ENCODE measurements at regions of chr20 and their contacts with region 1.

Region 1: GRCh38 chr20:4082406-4083097 is 67.2 kb upstream of the RNF24 start:
- DNase-seq: peak; percentile 64 to 79 (median 70)
- H3K4me3 ChIP-seq: peak overlapping the region in 1 of 2 donors; percentile 31
- H3K4me3 Mint-ChIP-seq: peak overlapping the region; percentile 30 to 88 (median 69)
- H3K27ac ChIP-seq: peak overlapping the region; percentile 39
- H3K27ac Mint-ChIP-seq: peak overlapping the region; percentile 83 to 97 (median 94)
- H3K4me1 ChIP-seq: peaks cover 48% of the 10 kb centered on the region
- H3K4me1 Mint-ChIP-seq: peaks cover 29 to 55% (median 42%) of the 10 kb centered on the region in 4 donors
- H3K27me3 ChIP-seq: no peaks in the 10 kb centered on the region
- H3K27me3 Mint-ChIP-seq: no peaks in the 10 kb centered on the region

Region 2: GRCh38 chr20:3753098-3753980 is 329.2 kb before region 1 on chr20:
- CTCF ChIA-PET with region 1: interaction called, 4 read pairs
- POLR2A ChIA-PET with region 1: interaction called, 3 read pairs
- intact Hi-C with region 1: loop called (anchors 1 kb)
- DNase-seq: peak; percentile 51 to 61 (median 57)
- H3K4me3 ChIP-seq: no peak overlapping the region
- H3K4me3 Mint-ChIP-seq: peak overlapping the region in 1 of 8 donors; percentile 17
- H3K27ac ChIP-seq: no peak overlapping the region
- H3K27ac Mint-ChIP-seq: peak overlapping the region in 4 of 7 donors; percentile 53 to 84 (median 66)
- H3K4me1 ChIP-seq: no peaks in the 10 kb centered on the region
- H3K4me1 Mint-ChIP-seq: peaks cover 2 to 14% (median 12%) of the 10 kb centered on the region in 4 donors
- H3K27me3 ChIP-seq: no peaks in the 10 kb centered on the region
- H3K27me3 Mint-ChIP-seq: peaks cover 0 to 2% of the 10 kb centered on the region in 2 donors

Region 3: GRCh38 chr20:3820048-3820900 is 262.3 kb before region 1 on chr20 and contains the start of gene AP5S1:
- CTCF ChIA-PET with region 1: interaction called, 6 read pairs
- POLR2A ChIA-PET with region 1: interaction called, 8 read pairs
- intact Hi-C with region 1: loop called (anchors 10 kb)
- DNase-seq: peak; percentile 90 to 97 (median 91)
- H3K4me3 ChIP-seq: peak within 1 kb of the TSS; percentile 78 to 88
- H3K4me3 Mint-ChIP-seq: peak within 1 kb of the TSS; percentile 83 to 94 (median 91)
- H3K27ac ChIP-seq: peak within 1 kb of the TSS; percentile 99
- H3K27ac Mint-ChIP-seq: peak within 1 kb of the TSS; percentile 96 to 99 (median 99)
- H3K4me1 ChIP-seq: peaks cover 53% of the 10 kb centered on the region
- H3K4me1 Mint-ChIP-seq: peaks cover 30 to 66% (median 50%) of the 10 kb centered on the region in 4 donors
- H3K27me3 ChIP-seq: no peaks in the 10 kb centered on the region
- H3K27me3 Mint-ChIP-seq: no peaks in the 10 kb centered on the region
- total RNA-seq, gene AP5S1: 10.4 to 11.1 TPM

Region 4: GRCh38 chr20:3888622-3889488 is 193.7 kb before region 1 on chr20 and contains the start of gene PANK2:
- CTCF ChIA-PET with region 1: interaction called, 8 read pairs
- POLR2A ChIA-PET with region 1: interaction called, 23 read pairs
- intact Hi-C with region 1: loop called (anchors 1 kb)
- DNase-seq: peak; percentile 95 to 98 (median 96)
- H3K4me3 ChIP-seq: peak within 1 kb of the TSS; percentile 96 to 98
- H3K4me3 Mint-ChIP-seq: peak within 1 kb of the TSS; percentile 96 to 100 (median 98)
- H3K27ac ChIP-seq: peak within 1 kb of the TSS; percentile 79
- H3K27ac Mint-ChIP-seq: peak within 1 kb of the TSS; percentile 96 to 98 (median 97)
- H3K4me1 ChIP-seq: peaks cover 46% of the 10 kb centered on the region
- H3K4me1 Mint-ChIP-seq: peaks cover 34 to 68% (median 47%) of the 10 kb centered on the region in 4 donors
- H3K27me3 ChIP-seq: no peaks in the 10 kb centered on the region
- H3K27me3 Mint-ChIP-seq: no peaks in the 10 kb centered on the region
- total RNA-seq, gene PANK2: 71.4 to 80.5 TPM

Region 5: DNA sequence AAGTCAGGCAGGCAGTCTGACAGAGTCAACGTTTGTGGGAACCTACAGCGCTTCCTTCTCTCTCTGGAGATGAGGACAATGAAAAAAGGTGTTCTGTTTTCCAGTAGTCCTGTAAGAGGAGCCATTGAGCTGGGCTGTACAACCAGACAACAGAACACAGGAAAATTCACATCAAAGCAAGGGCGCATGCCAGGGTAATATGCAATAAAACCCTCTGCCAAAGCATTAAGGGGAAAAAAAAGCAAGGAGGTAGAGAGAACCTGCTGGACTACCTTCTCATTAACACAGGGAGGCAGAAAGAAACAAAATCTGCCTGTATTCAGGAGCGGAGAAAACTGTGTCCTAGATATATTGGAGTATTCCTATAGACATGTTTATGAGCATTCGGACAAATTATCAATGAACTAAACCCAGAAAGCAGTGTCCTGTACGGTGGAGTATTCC is 68.5 kb before region 1 on chr20:
- CTCF ChIA-PET with region 1: interaction called, 97 read pairs
- POLR2A ChIA-PET with region 1: interaction called, 36 read pairs
- intact Hi-C with region 1: loop called (anchors 1 kb)
- DNase-seq: peak; percentile 41 to 57 (median 45)
- H3K4me3 ChIP-seq: peak overlapping the region in 1 of 2 donors; percentile 1
- H3K4me3 Mint-ChIP-seq: peak overlapping the region; percentile 83 to 96 (median 92)
- H3K27ac ChIP-seq: no peak overlapping the region
- H3K27ac Mint-ChIP-seq: peak overlapping the region; percentile 71 to 98 (median 92)
- H3K4me1 ChIP-seq: peaks cover 32% of the 10 kb centered on the region
- H3K4me1 Mint-ChIP-seq: peaks cover 14 to 40% (median 31%) of the 10 kb centered on the region in 4 donors
- H3K27me3 ChIP-seq: no peaks in the 10 kb centered on the region
- H3K27me3 Mint-ChIP-seq: no peaks in the 10 kb centered on the region

Region 6: DNA sequence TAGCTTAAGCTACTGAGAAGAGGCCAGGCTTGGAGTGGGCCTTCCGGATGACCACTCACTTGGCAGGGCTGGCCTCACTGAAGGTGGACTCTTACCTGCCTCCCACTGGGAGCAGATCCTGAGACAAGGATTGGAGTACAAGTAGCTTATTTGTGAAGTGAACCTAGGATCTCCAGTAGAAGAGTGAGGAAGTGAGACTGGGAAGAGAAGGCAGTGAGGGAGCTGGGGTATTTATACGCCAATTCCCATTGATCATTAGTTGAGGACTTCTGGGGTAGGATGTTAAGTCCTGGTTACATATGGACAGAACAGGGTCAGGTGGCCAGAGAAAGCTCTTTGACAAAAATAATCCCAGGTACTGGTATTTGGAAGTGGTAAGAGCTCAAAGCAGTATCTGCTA is 34.9 kb before region 1 on chr20:
- CTCF ChIA-PET with region 1: interaction called, 10 read pairs
- POLR2A ChIA-PET with region 1: interaction called, 3 read pairs
- intact Hi-C with region 1: no loop called
- DNase-seq: no peak
- H3K4me3 ChIP-seq: no peak overlapping the region
- H3K4me3 Mint-ChIP-seq: no peak overlapping the region
- H3K27ac ChIP-seq: no peak overlapping the region
- H3K27ac Mint-ChIP-seq: no peak overlapping the region
- H3K4me1 ChIP-seq: no peaks in the 10 kb centered on the region
- H3K4me1 Mint-ChIP-seq: no peaks in the 10 kb centered on the region
- H3K27me3 ChIP-seq: no peaks in the 10 kb centered on the region
- H3K27me3 Mint-ChIP-seq: peaks cover 0 to 4% of the 10 kb centered on the region in 2 donors

Region 7: GRCh38 chr20:4187147-4187546 is 104.6 kb after region 1 on chr20:
- CTCF ChIA-PET with region 1: no interaction called
- POLR2A ChIA-PET with region 1: no interaction called
- intact Hi-C with region 1: no loop called
- DNase-seq: no peak
- H3K4me3 ChIP-seq: no peak overlapping the region
- H3K4me3 Mint-ChIP-seq: no peak overlapping the region
- H3K27ac ChIP-seq: no peak overlapping the region
- H3K27ac Mint-ChIP-seq: no peak overlapping the region
- H3K4me1 ChIP-seq: no peaks in the 10 kb centered on the region
- H3K4me1 Mint-ChIP-seq: no peaks in the 10 kb centered on the region
- H3K27me3 ChIP-seq: no peaks in the 10 kb centered on the region
- H3K27me3 Mint-ChIP-seq: peaks cover 7 to 14% of the 10 kb centered on the region in 2 donors

Measured in CD4-positive, alpha-beta memory T cell (primary cell).